Prostate gland (tissue), 2 donors: ENCODE measurements at regions of chr7 and their contacts with region 1.

Region 1: DNA sequence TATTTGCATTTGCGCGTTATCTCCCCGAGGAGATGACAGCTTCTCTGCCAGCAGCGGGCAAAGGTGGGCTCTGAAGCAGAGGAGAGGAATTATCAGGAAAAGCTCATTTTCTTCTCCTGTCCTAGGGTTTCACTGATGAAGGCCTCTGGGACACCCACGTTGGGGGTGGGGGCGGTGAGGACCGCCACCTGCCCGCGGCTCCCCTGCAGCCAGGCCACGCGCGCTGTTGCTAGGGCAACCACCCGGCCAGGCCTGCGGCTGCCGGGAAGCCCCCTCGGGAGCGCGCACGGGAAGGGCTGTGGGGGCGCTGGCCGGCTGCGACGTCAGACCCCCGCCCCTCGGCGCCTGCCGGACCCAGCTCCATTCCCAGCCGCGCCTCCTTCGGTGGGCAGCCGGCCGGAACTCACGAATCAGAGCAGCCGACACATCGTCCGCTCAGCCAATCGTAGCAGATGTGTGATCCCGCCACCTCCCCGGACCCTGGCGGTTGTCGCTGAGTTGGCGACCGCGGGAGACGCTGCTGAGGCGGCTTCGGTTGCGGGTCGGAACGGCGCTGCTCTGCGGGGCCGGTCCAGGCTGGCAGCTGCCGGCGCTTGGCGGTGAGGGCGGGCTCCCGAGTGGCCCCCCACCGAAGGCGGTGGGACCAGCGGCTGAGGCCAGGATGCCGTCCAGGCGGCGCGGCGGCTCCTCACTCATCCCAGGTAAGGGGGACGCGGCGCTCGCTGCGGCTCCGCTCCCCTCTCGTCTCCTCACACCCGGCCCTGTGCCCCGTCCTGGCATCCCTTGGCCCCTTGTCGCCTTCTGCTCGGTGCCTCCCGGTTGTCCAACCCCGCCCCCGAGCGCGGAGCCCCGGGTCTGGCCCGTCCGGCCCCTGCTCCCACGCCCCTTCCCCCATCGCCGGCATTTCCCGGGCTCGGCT is at the start of gene TPST1:
- DNase-seq: peak; percentile 84
- H3K4me3 ChIP-seq: peak within 1 kb of the TSS; percentile 67 to 98
- H3K27ac ChIP-seq: peak within 1 kb of the TSS; percentile 64 to 79
- H3K4me1 ChIP-seq: no peaks in the 10 kb centered on the region
- H3K27me3 ChIP-seq: no peaks in the 10 kb centered on the region
- CTCF ChIP-seq: peak; percentile 29 to 90 (median 59)
- POLR2A ChIP-seq: peak; percentile 92
- total RNA-seq, gene TPST1: 9.9 to 21.4 TPM

Region 2: GRCh38 chr7:66150471-66150870 is 54.6 kb before region 1 on chr7:
- intact Hi-C with region 1: loop called (anchors 2 kb)
- DNase-seq: no peak
- H3K4me3 ChIP-seq: no peak overlapping the region
- H3K27ac ChIP-seq: peak overlapping the region; percentile 32 to 33
- H3K4me1 ChIP-seq: no peaks in the 10 kb centered on the region
- H3K27me3 ChIP-seq: no peaks in the 10 kb centered on the region
- CTCF ChIP-seq: no peak
- POLR2A ChIP-seq: no peak

Region 3: DNA sequence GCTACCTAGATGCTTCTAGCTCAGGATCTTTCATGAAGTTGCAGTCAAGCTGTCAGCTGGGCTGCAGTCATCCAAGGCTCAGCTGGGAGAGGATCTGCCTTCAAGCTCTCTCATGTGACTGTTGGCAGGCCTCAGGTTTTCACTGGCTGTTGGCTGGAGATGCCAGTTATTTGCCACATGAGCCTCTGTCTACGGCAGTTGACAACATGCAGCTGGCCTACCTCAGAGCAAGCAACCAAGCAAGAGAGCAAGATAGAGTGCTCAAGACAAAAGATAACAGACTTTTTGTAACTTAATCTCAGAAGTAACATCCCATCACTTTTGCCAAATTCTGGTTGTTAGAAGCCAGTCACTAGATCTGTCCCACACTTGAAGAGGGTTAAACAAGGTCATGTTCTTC is 125.9 kb after region 1 on chr7:
- intact Hi-C with region 1: loop called (anchors 10 kb)
- DNase-seq: no peak
- H3K4me3 ChIP-seq: no peak overlapping the region
- H3K27ac ChIP-seq: no peak overlapping the region
- H3K4me1 ChIP-seq: no peaks in the 10 kb centered on the region
- H3K27me3 ChIP-seq: no peaks in the 10 kb centered on the region
- CTCF ChIP-seq: no peak
- POLR2A ChIP-seq: no peak

Region 4: DNA sequence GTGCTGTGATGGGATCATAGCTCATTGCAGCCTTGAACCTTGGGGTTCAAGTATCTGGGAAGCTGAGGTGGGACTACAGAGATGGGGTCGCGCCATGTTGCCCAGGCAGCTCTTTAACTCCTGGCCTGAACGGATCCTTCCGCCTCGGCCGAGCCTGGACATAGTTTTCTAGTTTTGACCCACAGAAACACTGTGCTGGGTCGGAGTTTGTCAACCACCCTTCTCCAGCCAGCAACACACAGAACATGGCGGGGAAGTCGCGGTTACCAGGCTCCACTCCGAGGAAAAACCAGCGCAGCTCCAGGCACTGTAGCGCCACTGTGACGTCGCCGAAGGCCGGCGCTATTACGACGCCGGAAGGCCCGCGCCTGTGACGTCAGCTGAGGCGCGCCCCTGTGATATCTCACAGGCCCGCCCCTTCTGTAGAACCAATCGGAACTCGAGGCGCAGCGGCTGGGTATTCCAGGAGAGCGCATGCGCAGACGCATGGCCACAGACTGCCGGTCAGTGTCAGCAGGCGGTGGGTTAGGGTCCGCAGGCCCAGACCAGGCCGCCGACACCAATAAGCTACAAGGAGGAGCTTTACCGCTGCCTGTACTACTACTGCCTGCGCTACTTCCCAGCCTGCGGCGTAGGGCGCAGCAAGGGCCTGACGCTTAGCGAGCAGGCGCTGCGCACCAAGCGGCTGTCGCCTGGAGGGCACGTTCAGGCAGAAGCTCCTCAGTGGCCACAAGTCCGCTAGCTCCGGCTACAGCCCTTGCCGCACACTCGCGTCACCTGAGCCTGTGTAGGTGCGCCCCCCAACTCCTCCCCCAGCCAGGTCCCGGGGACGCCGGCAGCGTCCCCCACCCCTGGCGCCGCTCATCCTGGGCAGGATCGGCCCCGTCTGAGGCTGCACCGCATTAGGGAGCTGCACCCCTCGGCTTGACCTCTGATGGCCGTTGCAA is 288.4 kb after region 1 on chr7:
- intact Hi-C with region 1: loop called (anchors 5 kb)
- DNase-seq: peak; percentile 98
- H3K4me3 ChIP-seq: peak overlapping the region; percentile 57 to 71
- H3K27ac ChIP-seq: peak overlapping the region; percentile 94 to 95
- H3K4me1 ChIP-seq: no peaks in the 10 kb centered on the region
- H3K27me3 ChIP-seq: no peaks in the 10 kb centered on the region
- CTCF ChIP-seq: peak in 2 of 4 experiments; percentile 50 to 53
- POLR2A ChIP-seq: peak; percentile 94